ENCODE measurements at regions of chr7 and their contacts with region 1.

Region 1: GRCh38 chr7:12458520-12459131 is 55.0 kb upstream of the VWDE start:
- DNase-seq: no peak
- H3K4me3 ChIP-seq: no peak overlapping the region
- H3K27ac ChIP-seq: no peak overlapping the region
- H3K27me3 ChIP-seq: no peaks in the 10 kb centered on the region
- CTCF ChIP-seq: peak; percentile 81

Region 2: GRCh38 chr7:12423355-12423994 is 35.2 kb before region 1 on chr7:
- CTCF ChIA-PET with region 1: interaction called, 12 read pairs
- POLR2A ChIA-PET with region 1: no interaction called
- DNase-seq: no peak
- H3K4me3 ChIP-seq: no peak overlapping the region
- H3K27ac ChIP-seq: no peak overlapping the region
- H3K27me3 ChIP-seq: no peaks in the 10 kb centered on the region
- CTCF ChIP-seq: no peak

Region 3: GRCh38 chr7:12444785-12445184 is 13.8 kb before region 1 on chr7:
- CTCF ChIA-PET with region 1: interaction called, 24 read pairs
- POLR2A ChIA-PET with region 1: no interaction called
- DNase-seq: no peak
- H3K4me3 ChIP-seq: no peak overlapping the region
- H3K27ac ChIP-seq: no peak overlapping the region
- H3K27me3 ChIP-seq: no peaks in the 10 kb centered on the region
- CTCF ChIP-seq: no peak

Region 4: DNA sequence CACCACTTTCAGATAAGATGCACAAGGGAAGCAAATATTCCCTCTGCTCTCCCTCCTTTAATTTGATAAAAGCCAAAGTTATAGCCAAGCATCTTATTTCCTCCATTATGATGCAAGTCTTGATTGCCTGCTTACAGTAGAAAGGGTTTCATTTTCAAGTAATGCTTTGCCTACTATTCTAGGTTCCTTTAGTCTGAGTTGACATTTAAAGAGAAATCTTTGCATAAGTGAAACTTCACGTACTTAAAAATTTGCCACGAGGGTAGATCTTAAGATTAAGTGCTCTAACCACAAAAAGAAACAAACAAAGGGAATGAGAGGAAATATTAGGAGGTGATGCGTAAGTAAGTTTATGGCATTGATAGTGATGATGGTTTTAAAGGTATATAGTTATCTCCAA is 23.1 kb after region 1 on chr7:
- CTCF ChIA-PET with region 1: interaction called, 147 read pairs
- POLR2A ChIA-PET with region 1: no interaction called
- DNase-seq: no peak
- H3K4me3 ChIP-seq: no peak overlapping the region
- H3K27ac ChIP-seq: no peak overlapping the region
- H3K27me3 ChIP-seq: no peaks in the 10 kb centered on the region
- CTCF ChIP-seq: no peak

Region 5: DNA sequence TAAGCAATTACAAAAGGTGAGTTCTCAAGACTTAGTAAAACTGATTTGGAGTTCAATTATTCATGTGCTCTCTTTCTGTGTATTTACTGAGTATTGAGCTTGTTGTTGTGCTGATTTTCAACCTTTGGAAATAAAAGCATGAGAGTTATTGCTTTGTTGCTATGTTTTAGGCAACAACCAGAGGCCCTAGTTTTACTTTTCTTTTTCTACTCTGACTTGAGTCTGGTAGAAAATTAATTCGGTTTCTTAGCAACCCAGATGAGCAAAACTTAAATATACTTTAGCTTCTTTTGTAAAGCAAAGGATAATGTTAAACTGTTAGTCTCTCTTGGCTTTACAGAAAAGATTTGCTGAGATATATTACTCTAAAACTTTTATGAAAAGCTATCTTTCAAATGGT is 45.5 kb after region 1 on chr7:
- CTCF ChIA-PET with region 1: interaction called, 11 read pairs
- POLR2A ChIA-PET with region 1: no interaction called
- DNase-seq: no peak
- H3K4me3 ChIP-seq: no peak overlapping the region
- H3K27ac ChIP-seq: no peak overlapping the region
- H3K27me3 ChIP-seq: no peaks in the 10 kb centered on the region
- CTCF ChIP-seq: no peak